PC-9 (cell line): ENCODE measurements at regions of chr7 and their contacts with region 1.

Region 1: DNA sequence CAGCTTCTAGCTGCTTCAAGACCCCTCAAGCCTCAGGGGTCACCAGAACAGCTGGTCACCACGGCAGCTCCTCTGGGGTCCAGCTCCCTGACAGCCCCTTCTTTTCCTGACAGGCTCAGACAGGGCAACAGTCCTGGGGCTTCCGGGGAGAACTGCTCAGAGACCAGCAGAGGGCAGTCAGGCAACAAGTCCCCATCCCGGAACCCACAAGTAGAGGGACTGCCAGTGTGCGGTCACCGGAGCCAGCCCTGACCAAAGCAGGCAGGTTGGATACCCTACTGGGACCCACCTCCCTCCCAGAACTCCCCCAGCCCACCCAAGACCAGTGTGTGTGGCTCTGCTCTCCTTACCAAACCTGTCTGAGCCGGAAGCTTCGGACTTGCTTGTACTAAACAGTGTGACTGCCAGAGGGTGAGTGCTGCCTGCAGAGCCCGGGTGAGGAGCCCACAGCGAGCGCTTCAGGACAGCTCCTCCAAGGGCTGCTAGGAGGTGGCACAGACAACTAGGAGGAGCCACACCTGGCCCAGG is 40.3 kb downstream of the YKT6 start:
- DNase-seq: peak; percentile 67 to 82
- H3K4me3 ChIP-seq: no peak overlapping the region
- H3K27ac ChIP-seq: no peak overlapping the region
- H3K4me1 ChIP-seq: no peaks in the 10 kb centered on the region
- H3K27me3 ChIP-seq: peaks cover 46% of the 10 kb centered on the region
- CTCF ChIP-seq: peak; percentile 91

Region 2: DNA sequence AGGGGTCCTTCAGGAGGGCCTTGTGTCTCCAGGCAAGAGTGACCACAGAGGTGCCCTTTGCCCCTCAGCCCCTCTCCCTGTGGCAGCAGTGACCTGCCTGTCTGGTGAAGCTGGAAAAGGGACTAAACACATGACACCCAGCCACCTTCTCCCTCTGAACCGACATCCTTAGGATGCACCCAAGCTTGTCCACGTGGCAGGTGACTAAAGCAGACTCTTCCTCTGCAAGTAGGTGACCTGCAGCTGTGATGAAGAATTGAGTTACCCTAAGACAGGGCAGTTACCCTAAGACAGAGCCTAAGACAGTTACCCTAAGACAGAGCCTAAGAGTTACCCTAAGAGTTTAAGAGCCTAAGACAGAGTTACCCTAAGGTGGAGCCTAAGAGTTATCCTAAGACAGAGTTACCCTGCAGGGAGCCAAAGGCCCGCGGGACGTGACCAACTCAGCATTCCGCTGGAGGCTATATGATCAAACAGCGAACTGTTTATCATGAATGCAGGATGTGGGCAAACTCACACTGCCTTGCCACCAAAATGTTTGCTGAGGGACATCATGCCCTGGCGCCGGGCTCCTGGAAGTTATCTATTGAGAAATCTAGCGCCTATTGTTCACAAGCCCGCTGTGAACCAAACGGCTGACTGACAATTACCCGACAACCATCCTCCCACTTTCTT is 432.8 kb before region 1 on chr7:
- CTCF ChIA-PET with region 1: no interaction called
- POLR2A ChIA-PET with region 1: no interaction called
- intact Hi-C with region 1: no loop called
- DNase-seq: no peak
- H3K4me3 ChIP-seq: no peak overlapping the region
- H3K27ac ChIP-seq: no peak overlapping the region
- H3K4me1 ChIP-seq: no peaks in the 10 kb centered on the region
- H3K27me3 ChIP-seq: no peaks in the 10 kb centered on the region
- CTCF ChIP-seq: no peak

Region 3: GRCh38 chr7:43977525-43977924 is 263.5 kb before region 1 on chr7:
- CTCF ChIA-PET with region 1: no interaction called
- POLR2A ChIA-PET with region 1: no interaction called
- intact Hi-C with region 1: no loop called
- DNase-seq: no peak
- H3K4me3 ChIP-seq: no peak overlapping the region
- H3K27ac ChIP-seq: no peak overlapping the region
- H3K4me1 ChIP-seq: no peaks in the 10 kb centered on the region
- H3K27me3 ChIP-seq: no peaks in the 10 kb centered on the region
- CTCF ChIP-seq: no peak

Region 4: GRCh38 chr7:44257618-44258422 is 16.8 kb after region 1 on chr7:
- CTCF ChIA-PET with region 1: interaction called, 18 read pairs
- POLR2A ChIA-PET with region 1: no interaction called
- intact Hi-C with region 1: no loop called
- DNase-seq: peak; percentile 86 to 88
- H3K4me3 ChIP-seq: no peak overlapping the region
- H3K27ac ChIP-seq: peak overlapping the region; percentile 26; the same call in 1 of the 2 replicates
- H3K4me1 ChIP-seq: peaks cover 30% of the 10 kb centered on the region
- H3K27me3 ChIP-seq: no peaks in the 10 kb centered on the region
- CTCF ChIP-seq: no peak

Region 5: GRCh38 chr7:44307301-44307900 is 66.4 kb after region 1 on chr7:
- CTCF ChIA-PET with region 1: interaction called, 3 read pairs
- POLR2A ChIA-PET with region 1: no interaction called
- intact Hi-C with region 1: loop called (anchors 1 kb)
- DNase-seq: peak; percentile 61 to 74
- H3K4me3 ChIP-seq: no peak overlapping the region
- H3K27ac ChIP-seq: no peak overlapping the region
- H3K4me1 ChIP-seq: no peaks in the 10 kb centered on the region
- H3K27me3 ChIP-seq: no peaks in the 10 kb centered on the region
- CTCF ChIP-seq: peak; percentile 61

Region 6: DNA sequence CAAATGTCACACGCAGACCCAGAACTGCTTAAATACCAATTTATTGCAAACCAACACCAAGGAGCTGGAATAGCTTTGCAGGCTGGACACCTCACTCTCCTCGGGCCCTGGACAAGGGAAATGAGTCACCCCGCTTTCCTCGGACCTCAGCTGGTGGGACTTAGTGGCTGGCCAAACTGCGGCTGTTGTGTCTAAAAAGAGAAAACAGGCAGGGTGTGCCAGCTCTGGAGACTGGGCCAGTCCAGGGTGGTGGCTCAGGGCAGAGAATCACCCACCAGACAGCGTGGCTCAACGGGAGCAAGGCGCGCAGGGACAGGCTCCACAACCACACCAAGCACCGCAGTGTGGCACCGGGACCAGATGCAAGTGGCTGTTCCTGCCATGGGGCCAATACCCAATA is 142.5 kb after region 1 on chr7:
- CTCF ChIA-PET with region 1: no interaction called
- POLR2A ChIA-PET with region 1: no interaction called
- intact Hi-C with region 1: loop called (anchors 5 kb)
- DNase-seq: peak in 1 of 2 experiments; percentile 48
- H3K4me3 ChIP-seq: no peak overlapping the region
- H3K27ac ChIP-seq: no peak overlapping the region
- H3K4me1 ChIP-seq: peaks cover 31% of the 10 kb centered on the region
- H3K27me3 ChIP-seq: no peaks in the 10 kb centered on the region
- CTCF ChIP-seq: no peak

Region 7: DNA sequence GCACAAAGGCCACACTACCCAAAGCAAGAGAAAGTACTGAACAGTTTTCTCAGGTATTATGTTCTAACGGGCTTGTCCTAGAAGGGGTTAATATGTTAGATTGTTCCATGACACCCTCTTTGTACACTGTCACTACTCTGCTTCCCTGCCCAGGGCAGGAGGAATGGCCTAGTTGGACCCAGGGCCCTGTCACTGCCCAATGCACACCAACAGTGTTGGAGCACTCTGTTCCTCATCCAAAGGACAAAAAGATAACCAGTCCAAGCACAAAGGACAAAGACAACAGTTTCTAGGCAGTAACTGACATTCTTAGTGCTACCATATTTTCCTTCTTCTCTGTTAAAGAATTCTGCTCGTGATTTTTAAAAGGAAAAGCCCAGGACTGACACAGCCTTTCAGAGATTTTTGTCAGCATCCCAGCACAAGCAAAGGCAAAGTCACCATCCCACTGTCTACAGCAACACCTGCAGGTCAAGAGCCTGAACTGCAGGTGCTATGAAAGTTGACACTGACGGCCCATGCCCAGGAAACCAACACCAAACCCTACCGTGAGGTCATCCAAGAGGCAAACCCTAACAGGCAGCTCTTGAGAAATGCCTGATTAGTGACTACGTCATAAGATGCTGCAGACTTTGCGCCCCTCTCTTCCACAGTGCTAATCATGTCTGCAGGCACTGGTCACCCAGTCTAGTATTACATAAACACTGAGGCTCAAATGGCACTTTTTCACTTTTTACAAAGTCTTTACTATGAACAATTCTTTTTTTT is 236.2 kb after region 1 on chr7:
- CTCF ChIA-PET with region 1: no interaction called
- POLR2A ChIA-PET with region 1: interaction called, 6 read pairs
- intact Hi-C with region 1: loop called (anchors 1 kb)
- DNase-seq: peak; percentile 79 to 87
- H3K4me3 ChIP-seq: no peak overlapping the region
- H3K27ac ChIP-seq: no peak overlapping the region
- H3K4me1 ChIP-seq: peaks cover 29% of the 10 kb centered on the region
- H3K27me3 ChIP-seq: no peaks in the 10 kb centered on the region
- CTCF ChIP-seq: peak; percentile 99

Region 8: GRCh38 chr7:44565097-44565794 is 324.2 kb after region 1 on chr7:
- CTCF ChIA-PET with region 1: interaction called, 4 read pairs
- POLR2A ChIA-PET with region 1: no interaction called
- intact Hi-C with region 1: loop called (anchors 1 kb)
- DNase-seq: peak in 1 of 2 experiments; percentile 78
- H3K4me3 ChIP-seq: no peak overlapping the region
- H3K27ac ChIP-seq: no peak overlapping the region
- H3K4me1 ChIP-seq: peaks cover 16% of the 10 kb centered on the region
- H3K27me3 ChIP-seq: no peaks in the 10 kb centered on the region
- CTCF ChIP-seq: peak; percentile 100

Region 9: DNA sequence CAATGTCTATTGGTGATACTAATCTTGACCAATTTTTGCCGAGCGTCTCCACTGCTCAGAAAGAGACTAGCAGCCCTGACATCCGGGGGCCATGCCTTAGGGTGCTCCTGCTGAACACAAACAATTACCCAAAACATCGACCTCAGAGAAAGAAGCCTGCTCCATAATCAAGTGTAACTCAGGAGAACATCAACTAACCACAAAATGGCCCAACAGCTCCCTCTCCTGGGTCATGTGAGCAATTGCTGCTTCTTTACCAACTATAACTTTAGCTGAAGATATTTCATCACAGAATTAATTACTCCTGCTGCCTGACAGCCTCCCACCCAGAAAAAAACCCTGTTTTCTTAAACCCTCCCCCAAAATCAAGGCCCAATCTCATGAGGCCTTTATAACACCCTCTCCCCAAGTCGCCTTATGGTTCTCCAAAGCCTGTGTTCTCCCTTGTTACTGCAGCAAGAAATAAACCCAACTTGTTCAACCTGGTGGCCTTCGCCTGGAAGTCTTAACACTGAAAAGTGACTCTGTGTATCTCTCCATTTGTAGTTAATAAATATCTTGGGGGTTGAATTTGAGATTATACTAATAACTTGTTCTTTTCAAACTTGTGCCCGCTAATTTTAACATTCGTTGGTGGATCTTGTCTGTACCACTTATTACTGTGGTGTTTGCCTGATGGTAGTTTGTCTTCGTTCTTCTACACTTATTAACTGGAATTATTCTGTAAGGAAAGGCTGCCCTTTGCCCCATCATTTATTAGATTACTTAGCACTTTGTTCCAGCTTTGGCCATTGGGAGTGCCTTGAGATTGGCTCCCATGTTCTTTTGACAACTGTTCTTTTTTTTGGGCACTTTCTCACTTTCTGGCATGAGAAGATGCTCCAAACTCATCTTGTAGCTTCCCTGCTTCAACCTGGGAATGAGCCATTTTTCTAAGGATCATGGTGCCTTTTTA is 895.3 kb after region 1 on chr7:
- CTCF ChIA-PET with region 1: no interaction called
- POLR2A ChIA-PET with region 1: no interaction called
- intact Hi-C with region 1: loop called (anchors 5 kb)
- DNase-seq: peak; percentile 63 to 74
- H3K4me3 ChIP-seq: no peak overlapping the region
- H3K27ac ChIP-seq: no peak overlapping the region
- H3K4me1 ChIP-seq: 0 out of 2 replicates have a peak, but pooled peaks cover 3% of the 10 kb centered on the region
- H3K27me3 ChIP-seq: no peaks in the 10 kb centered on the region
- CTCF ChIP-seq: peak; percentile 98